ENCODE measurements at regions of chr15 and their contacts with region 1.

Region 1: GRCh38 chr15:38563723-38564519 is 693 bp downstream of the RASGRP1 start:
- DNase-seq: peak; percentile 9
- H3K4me3 ChIP-seq: peak overlapping the region; percentile 54 to 85 (median 68)
- H3K27ac ChIP-seq: peak overlapping the region; percentile 80 to 89 (median 86)
- H3K4me1 ChIP-seq: peaks cover 12 to 48% (median 13%) of the 10 kb centered on the region in 3 donors
- H3K27me3 ChIP-seq: peaks cover 0 to 45% (median 2%) of the 10 kb centered on the region in 4 donors
- CTCF ChIP-seq: peak; percentile 91 to 96 (median 92)
- POLR2A ChIP-seq: no peak

Region 2: DNA sequence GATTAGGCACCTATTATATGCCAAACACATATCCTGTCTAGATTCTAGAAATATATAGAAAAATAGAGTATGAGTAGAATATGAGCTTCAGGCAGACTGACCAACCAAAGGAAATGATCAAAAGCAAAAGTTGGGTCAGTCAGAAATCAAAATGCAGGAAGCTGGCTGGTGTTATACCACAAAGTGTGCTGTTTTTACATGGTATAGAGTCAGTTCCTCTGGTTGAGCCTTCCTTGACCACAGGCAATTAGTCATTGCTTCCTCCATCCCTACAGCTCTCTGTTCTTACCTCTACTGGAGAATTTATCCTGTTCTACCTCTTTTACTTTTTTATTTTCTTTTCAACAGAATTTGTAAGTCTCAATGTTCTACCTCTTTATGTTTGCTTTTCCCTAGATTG is 479.6 kb before region 1 on chr15:
- intact Hi-C with region 1: no loop called
- DNase-seq: no peak
- H3K4me3 ChIP-seq: no peak overlapping the region
- H3K27ac ChIP-seq: no peak overlapping the region
- H3K4me1 ChIP-seq: no peaks in the 10 kb centered on the region
- H3K27me3 ChIP-seq: no peaks in the 10 kb centered on the region
- CTCF ChIP-seq: no peak
- POLR2A ChIP-seq: no peak

Region 3: DNA sequence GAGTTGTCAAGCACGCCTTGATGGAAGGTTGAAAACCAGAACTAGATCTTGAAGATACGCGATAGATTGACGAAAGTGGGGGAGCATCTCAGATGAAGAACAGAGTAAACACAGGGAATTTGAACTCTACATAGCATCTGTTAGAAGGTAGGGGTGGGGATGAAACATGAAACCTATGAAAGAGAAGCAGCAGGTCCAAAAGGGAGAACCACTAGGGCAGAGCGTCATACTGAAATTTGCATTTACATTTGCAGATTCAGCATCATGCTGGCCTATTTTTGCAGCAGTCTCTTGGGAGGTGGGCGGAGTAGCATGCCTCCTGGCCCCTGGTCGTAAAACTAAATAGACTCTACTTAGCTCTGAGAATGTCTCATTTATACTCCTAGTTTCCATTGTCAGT is 46.8 kb after region 1 on chr15:
- intact Hi-C with region 1: no loop called
- DNase-seq: no peak
- H3K4me3 ChIP-seq: no peak overlapping the region
- H3K27ac ChIP-seq: peak overlapping the region; percentile 50 to 75 (median 63)
- H3K4me1 ChIP-seq: peaks cover 5 to 53% (median 5%) of the 10 kb centered on the region in 3 donors
- H3K27me3 ChIP-seq: no peaks in the 10 kb centered on the region
- CTCF ChIP-seq: no peak
- POLR2A ChIP-seq: no peak

Region 4: DNA sequence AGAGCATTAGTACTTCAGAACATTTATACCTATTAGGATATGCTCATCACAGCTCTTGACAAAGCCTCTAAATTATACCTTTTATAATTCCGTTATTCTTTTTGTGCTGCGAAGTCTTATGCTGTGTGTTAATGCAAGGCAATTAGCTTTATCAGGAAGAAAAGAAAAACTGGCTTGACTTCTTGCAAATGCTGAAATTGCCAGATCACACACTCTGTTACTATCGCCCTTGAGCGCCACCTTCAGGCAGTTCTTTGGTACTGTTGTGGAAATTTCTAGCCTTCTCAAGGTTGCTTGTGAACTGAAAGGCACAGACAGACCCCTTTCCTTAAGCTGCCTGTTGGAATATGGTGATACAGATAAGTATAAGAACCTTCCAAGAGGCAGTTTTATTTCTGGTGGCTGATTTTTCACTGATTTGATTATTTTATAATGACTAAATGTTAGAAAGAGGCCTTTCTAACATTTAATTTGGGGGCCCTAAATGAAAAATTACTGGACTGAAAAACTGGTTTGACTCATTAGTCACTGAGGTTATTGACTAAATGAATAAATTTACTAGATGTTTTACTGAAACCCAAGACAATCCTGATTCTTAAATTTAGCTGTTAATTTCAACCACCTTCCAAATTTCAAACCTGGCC is 126.9 kb after region 1 on chr15:
- intact Hi-C with region 1: loop called (anchors 5 kb)
- DNase-seq: no peak
- H3K4me3 ChIP-seq: no peak overlapping the region
- H3K27ac ChIP-seq: no peak overlapping the region
- H3K4me1 ChIP-seq: peaks cover 0 to 44% (median 0%) of the 10 kb centered on the region in 3 donors
- H3K27me3 ChIP-seq: no peaks in the 10 kb centered on the region
- CTCF ChIP-seq: peak; percentile 76 to 86 (median 78)
- POLR2A ChIP-seq: no peak